Heart right ventricle (tissue), 16 donors: ENCODE measurements at regions of chr5 and their contacts with region 1.

Region 1: DNA sequence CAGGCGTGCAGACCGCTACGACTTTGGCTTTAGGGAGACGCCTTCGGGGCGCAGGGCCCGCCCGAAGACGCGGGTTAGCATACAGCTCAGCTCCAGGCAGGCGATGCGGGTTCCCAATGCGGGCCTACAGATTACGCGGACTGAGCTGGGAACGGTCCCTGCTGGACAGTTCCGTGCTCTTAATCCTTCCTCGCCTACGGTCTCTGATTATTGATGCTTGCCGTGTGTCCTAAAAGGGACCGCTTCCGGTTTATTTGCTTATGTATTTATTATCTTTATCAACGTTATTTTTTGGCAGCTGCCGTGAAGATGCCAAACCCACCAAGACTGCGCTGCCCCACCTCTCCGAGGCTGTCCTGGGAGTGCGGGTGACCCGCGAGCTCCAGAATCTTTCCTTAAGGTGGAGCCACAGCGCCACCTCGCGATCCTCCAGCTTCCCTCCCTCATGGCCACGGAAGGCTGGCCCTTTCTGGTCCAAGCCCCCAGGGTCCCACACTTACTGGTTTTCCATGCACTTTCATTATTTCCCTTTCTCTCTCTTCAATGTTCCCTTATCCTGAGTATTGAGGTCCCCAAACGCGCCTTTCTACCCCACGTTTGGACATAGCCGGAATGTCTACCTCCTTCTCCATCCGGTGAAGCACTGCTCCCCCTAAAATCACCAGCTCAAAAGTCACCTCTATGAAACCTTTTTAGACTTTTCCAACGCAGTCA is 7.0 kb upstream of the EBF1 start:
- DNase-seq: peak; percentile 81 to 85
- ATAC-seq: peak; percentile 84 to 93 (median 90)
- H3K4me3 ChIP-seq: peak overlapping the region in 9 of 10 donors; percentile 1 to 55 (median 41)
- H3K27ac ChIP-seq: peak overlapping the region in 4 of 10 donors; percentile 1 to 35 (median 20)
- H3K4me1 ChIP-seq: peaks cover 0 to 51% (median 27%) of the 10 kb centered on the region in 9 donors
- H3K27me3 ChIP-seq: peaks cover 4 to 82% (median 48%) of the 10 kb centered on the region in 7 donors
- CTCF ChIP-seq: peak; percentile 71 to 97 (median 96)

Region 2: DNA sequence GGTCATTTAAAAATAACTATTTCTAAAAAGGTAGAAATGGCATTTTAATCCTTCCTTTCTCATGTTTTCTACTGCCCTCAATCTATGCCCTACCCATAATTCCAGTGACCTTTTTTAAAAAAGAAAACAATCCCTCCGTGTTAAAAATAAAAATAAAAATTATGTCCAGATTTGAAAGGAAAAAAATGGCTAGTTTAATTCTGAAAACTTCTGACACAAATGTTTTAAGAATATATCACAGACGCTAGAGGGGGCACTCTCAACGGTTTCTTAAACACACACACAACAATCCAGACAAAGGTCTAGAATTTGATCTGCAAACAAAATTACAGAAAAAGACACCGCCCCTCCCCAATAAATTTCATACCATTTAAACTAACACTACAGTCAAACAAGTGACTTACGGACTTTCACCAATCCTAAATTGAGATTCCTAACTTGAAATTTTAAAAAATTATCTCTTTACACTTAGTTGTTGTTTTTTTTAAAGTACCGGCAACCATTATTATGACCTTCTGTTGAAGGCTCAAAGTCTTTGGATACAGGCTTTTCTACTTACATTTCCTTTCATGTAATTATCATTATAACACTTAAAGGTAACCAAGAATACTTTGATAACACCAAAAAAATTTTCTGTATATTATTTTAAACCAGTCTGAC is 1286.0 kb before region 1 on chr5:
- intact Hi-C with region 1: loop called in 1 of 10 experiments (anchors 10 kb)
- DNase-seq: peak in 1 of 2 donors; percentile 47
- ATAC-seq: peak in 5 of 8 donors; percentile 37 to 73 (median 58)
- H3K4me3 ChIP-seq: no peak overlapping the region
- H3K27ac ChIP-seq: peak overlapping the region in 3 of 10 donors; percentile 28 to 66 (median 39)
- H3K4me1 ChIP-seq: peaks cover 0 to 72% (median 56%) of the 10 kb centered on the region in 9 donors
- H3K27me3 ChIP-seq: no peaks in the 10 kb centered on the region
- CTCF ChIP-seq: peak; percentile 35 to 71 (median 61)

Region 3: DNA sequence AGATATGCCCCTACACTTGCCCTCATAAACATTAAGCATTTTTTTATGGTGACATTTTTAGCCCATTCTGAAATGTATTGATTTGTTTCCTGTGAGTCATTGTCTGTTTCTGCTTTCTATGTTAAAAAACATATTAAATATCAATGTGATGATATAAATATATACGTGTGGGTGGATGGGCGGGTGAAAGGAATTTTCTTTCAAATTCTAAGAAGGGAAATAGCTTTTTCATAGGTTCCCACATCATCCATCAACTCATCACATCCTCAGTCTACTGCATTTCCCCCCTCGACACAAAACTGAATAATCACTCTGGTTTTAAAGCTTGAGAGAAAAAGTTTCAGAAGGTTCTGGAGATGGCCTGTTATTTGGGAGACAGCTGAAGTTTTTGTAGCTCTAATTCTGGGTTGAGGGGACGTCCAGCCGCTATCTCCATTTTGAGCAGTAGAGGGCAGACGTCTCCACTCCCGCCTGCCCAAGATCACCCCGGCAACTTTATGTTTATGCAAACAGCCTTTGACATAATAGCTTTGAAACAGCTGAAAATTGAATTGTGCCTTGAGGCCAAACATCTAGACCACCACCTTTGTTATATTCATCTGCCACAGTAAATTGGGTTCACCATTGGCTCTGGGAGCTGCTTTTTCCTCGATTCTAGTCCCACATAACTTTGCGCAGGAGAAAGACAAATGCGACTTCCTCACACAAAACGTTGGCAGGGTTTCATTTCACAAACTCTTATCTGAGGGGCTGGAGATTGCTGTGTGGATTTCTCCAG is 1031.5 kb before region 1 on chr5:
- intact Hi-C with region 1: loop called in 9 of 10 experiments (anchors 2 to 10 kb)
- DNase-seq: peak; percentile 28 to 62
- ATAC-seq: peak; percentile 59 to 92 (median 82)
- H3K4me3 ChIP-seq: peak overlapping the region in 8 of 10 donors; percentile 17 to 43 (median 32)
- H3K27ac ChIP-seq: peak overlapping the region in 8 of 10 donors; percentile 15 to 78 (median 52)
- H3K4me1 ChIP-seq: peaks cover 0 to 16% (median 3%) of the 10 kb centered on the region in 9 donors
- H3K27me3 ChIP-seq: no peaks in the 10 kb centered on the region
- CTCF ChIP-seq: peak; percentile 67 to 92 (median 85)

Region 4: DNA sequence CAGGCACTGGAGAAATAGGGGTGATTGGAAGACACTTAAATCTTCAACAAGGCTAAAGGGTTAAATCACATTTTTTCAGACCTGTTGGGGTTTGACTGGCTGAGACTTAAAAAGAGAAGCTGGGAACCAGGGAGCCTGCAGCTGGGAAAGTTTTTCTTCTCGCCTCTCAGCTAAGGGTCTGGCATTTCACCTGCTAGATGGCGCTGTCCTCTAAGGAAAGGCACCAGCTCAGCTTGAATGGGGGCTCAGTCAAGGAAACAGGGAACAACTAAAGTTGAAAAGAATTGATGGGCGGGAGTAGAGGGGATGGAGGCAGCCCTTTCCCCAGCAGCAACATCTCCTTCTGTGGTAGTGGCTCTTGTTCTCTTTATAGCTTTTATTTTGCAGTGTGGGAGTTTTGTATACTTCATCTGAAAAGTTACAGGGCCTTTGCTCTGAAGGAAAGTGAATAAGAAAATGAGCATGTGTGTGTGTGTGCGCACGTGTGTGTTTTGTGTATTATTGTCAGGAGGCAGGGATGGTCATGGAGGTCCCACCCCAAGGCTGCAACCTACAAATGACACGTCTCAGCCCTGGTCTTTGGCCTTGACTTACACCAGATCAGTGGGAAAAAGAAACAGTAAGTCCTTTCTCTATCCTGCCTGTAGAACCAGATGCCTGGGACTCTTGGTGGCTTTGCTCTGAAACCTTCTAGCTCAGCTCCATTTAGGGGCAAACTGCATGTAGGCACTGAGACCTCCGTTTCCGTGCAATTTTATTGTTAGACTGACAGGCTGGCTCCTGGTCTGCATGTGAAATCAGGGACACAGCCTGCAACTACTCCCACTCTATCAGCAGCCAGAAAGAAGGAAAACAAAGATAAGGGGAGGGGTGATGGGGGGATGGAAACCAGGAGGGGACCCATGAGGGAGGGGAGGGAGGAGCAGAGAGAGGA is 931.5 kb before region 1 on chr5:
- intact Hi-C with region 1: loop called (anchors 1 to 5 kb)
- DNase-seq: peak; percentile 62 to 87
- ATAC-seq: peak; percentile 75 to 95 (median 92)
- H3K4me3 ChIP-seq: no peak overlapping the region
- H3K27ac ChIP-seq: peak overlapping the region in 9 of 10 donors; percentile 4 to 80 (median 69)
- H3K4me1 ChIP-seq: peaks cover 0 to 27% (median 14%) of the 10 kb centered on the region in 9 donors
- H3K27me3 ChIP-seq: no peaks in the 10 kb centered on the region
- CTCF ChIP-seq: peak; percentile 55 to 89 (median 81)

Region 5: GRCh38 chr5:158423623-158424200 is 683.0 kb before region 1 on chr5:
- intact Hi-C with region 1: loop called in 2 of 10 experiments (anchors 10 kb)
- DNase-seq: no peak
- ATAC-seq: peak in 6 of 8 donors; percentile 48 to 73 (median 62)
- H3K4me3 ChIP-seq: no peak overlapping the region
- H3K27ac ChIP-seq: peak overlapping the region in 9 of 10 donors; percentile 45 to 84 (median 78)
- H3K4me1 ChIP-seq: peaks cover 0 to 43% (median 22%) of the 10 kb centered on the region in 9 donors
- H3K27me3 ChIP-seq: no peaks in the 10 kb centered on the region
- CTCF ChIP-seq: no peak